ENCODE measurements at regions of chr1 and their contacts with region 1.

Region 1: DNA sequence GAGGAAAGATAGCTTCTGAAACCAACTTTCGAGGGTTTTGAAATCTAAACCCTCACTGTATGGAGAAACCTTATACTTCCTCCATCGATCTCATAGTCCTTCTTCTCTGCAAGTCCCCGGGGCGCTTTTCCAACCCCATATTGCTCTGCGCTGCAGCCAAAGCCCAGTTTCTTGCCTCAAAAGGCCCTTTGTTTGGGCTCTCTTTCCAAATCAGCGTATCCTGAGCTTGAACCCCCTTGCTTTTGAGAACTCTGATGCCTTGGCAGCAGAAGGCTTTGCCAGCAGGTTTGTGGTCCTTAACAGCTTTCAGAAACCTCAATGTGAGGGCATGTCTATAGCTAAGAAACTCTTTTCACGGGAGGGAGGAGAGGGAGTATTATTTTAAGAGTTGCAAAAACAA is 21.6 kb downstream of the PLPP3 start:
- DNase-seq: no peak
- ATAC-seq: no peak
- H3K4me3 ChIP-seq: no peak overlapping the region
- H3K27ac ChIP-seq: no peak overlapping the region
- H3K4me1 ChIP-seq: peaks cover 5% of the 10 kb centered on the region; the same call in 1 of the 2 replicates
- H3K27me3 ChIP-seq: no peaks in the 10 kb centered on the region
- CTCF ChIP-seq: no peak

Region 2: DNA sequence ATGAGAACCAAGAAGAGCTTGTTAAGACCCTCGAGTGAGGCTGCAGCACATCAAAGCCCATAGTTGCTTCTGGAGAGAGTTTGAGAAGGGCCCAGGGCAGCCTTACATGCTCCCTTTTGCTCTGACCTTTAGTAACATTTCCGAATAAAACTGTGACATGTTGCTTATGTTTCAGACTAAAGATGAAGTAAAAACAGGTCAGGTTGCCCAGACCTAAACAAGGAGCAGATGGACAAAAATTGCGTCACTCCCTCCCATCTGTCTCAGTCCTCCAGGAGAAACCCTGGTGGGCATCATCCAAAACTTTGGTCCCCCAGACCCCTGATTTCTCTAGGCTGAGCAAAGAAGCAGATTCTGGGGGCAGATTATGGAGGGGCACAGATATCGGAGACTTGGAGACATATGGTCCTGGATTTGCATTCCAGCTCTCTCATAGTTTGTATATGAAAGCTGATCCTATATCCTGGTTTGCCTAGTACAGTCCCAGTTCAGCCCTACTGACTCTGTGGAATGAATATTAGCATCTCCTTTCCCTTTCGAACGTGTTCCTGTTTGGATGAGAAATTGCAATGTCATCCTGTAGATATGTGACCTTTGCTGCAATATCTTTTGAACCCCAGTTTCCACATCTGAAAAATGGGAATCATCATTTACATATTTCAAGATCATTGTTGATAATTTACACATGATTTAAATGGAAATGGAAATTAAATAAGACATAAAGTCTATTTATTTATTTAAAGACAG is 1037.6 kb before region 1 on chr1:
- CTCF ChIA-PET with region 1: no interaction called
- POLR2A ChIA-PET with region 1: interaction called, 11 read pairs
- intact Hi-C with region 1: no loop called
- DNase-seq: no peak
- ATAC-seq: no peak
- H3K4me3 ChIP-seq: no peak overlapping the region
- H3K27ac ChIP-seq: no peak overlapping the region
- H3K4me1 ChIP-seq: no peaks in the 10 kb centered on the region
- H3K27me3 ChIP-seq: no peaks in the 10 kb centered on the region
- CTCF ChIP-seq: no peak

Region 3: GRCh38 chr1:56461158-56462127 is 96.3 kb before region 1 on chr1:
- CTCF ChIA-PET with region 1: no interaction called
- POLR2A ChIA-PET with region 1: no interaction called
- intact Hi-C with region 1: no loop called
- DNase-seq: no peak
- ATAC-seq: no peak
- H3K4me3 ChIP-seq: no peak overlapping the region
- H3K27ac ChIP-seq: no peak overlapping the region
- H3K4me1 ChIP-seq: peaks cover 9% of the 10 kb centered on the region
- H3K27me3 ChIP-seq: no peaks in the 10 kb centered on the region
- CTCF ChIP-seq: no peak